ENCODE measurements at regions of chr12 and their contacts with region 1.

Region 1: DNA sequence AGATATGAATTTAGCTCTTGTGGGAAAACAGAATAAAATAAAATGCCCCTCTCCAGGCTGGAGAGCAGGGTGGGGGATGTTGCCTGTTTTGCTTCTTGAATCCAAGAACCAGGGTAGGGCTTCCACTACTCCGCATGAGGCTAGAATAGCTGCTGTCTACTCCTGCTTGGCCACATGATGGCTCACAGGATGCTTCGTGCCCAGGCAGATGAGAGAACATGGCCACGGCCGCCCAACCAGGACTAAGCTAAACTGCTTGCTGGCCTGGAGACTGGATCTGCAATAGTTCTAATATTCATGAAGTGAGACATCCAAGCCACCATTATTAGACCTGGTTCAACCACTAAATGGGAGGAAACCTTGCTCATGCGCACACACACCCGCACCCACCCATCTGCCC is 122.2 kb upstream of the METAP2 start:
- DNase-seq: peak; percentile 31
- ATAC-seq: peak; percentile 93
- H3K4me3 ChIP-seq: no peak overlapping the region
- H3K27ac ChIP-seq: no peak overlapping the region
- H3K4me1 ChIP-seq: no peaks in the 10 kb centered on the region
- H3K27me3 ChIP-seq: no peaks in the 10 kb centered on the region; a peak in 1 of 5 replicates
- CTCF ChIP-seq: peak; percentile 41
- EP300 ChIP-seq: no peak
- POLR2A ChIP-seq: no peak
- RAD21 ChIP-seq: no peak

Region 2: GRCh38 chr12:95532851-95533250 is 181.1 kb after region 1 on chr12:
- CTCF ChIA-PET with region 1: no interaction called
- POLR2A ChIA-PET with region 1: no interaction called
- in situ Hi-C with region 1: loop called (anchors 10 kb)
- intact Hi-C with region 1: no loop called
- DNase-seq: peak; percentile 5
- ATAC-seq: no peak
- H3K4me3 ChIP-seq: no peak overlapping the region
- H3K27ac ChIP-seq: no peak overlapping the region
- H3K4me1 ChIP-seq: no peaks in the 10 kb centered on the region
- H3K27me3 ChIP-seq: peaks cover 0 to 9% of the 10 kb centered on the region in 2 experiments; a peak in 1 of 5 replicates
- CTCF ChIP-seq: no peak
- EP300 ChIP-seq: no peak
- POLR2A ChIP-seq: no peak
- RAD21 ChIP-seq: no peak

Measured in HepG2 (cell line).